Activated T-helper 1 cell treated with anti-CD3 and anti-CD28 coated beads, Interleukin-12 subunit alpha, Interleukin-12 subunit beta, Interleukin-2, Interleukin-4 antibody, amounts not matched to agents 30 ng/mL and 10 ng/mL and 1 ng/mL, durations not matched to agents 14 hours and 24 hours and 36 hours (primary cell): ENCODE measurements at regions of chr5 and their contacts with region 1.

Region 1: DNA sequence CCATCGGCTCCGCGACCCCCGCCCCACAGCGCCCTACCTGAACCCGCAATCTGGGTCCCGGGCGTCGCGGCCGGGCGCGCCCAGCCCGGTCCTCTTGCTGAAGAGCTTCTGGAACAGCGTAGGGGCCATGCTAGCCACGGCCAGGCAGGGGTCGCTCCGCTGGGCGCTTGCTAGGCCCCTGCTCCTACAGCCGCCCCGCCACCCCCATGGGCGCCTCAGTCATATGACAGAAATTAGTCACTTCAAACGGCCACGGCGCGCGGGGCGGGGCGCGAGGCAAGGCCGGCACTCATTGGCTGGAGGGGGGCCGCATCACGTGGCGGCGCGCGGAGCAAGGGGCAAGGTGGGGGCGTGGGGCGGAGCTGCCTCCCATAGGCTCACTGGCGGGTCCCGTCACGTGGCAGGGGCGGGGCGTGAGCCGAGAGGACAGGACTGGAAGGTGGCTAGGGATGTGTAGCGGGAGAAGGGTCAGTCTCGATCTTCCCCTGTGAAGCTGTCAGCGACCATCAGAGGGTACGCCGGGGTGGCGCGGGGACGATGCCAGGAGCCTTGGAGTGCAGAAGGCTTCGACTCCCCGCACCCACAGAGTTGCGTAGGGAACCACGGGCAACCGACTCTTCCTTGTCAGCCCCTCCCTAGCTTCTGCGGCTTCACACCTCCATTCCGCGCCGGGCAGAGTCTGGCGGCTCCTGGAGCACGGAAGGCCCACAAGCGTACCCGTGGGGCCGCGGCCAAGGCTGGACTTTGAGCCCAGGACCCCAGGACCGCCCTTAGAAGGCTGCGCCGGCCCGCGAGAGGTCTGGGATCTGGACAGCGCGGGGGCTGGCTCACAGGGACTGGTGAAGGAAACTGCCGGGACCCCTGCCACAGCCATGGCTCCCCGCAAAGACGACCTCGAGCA is at the start of gene FNIP1:
- DNase-seq: peak; percentile 98
- H3K4me3 Mint-ChIP-seq: peak within 1 kb of the TSS; percentile 97
- H3K27ac Mint-ChIP-seq: peak within 1 kb of the TSS; percentile 93
- H3K4me1 Mint-ChIP-seq: peaks cover 21% of the 10 kb centered on the region
- H3K27me3 Mint-ChIP-seq: peaks cover under 1% of the 10 kb centered on the region
- total RNA-seq, gene FNIP1: 18.8 and 19.0 TPM in 2 replicates

Region 2: DNA sequence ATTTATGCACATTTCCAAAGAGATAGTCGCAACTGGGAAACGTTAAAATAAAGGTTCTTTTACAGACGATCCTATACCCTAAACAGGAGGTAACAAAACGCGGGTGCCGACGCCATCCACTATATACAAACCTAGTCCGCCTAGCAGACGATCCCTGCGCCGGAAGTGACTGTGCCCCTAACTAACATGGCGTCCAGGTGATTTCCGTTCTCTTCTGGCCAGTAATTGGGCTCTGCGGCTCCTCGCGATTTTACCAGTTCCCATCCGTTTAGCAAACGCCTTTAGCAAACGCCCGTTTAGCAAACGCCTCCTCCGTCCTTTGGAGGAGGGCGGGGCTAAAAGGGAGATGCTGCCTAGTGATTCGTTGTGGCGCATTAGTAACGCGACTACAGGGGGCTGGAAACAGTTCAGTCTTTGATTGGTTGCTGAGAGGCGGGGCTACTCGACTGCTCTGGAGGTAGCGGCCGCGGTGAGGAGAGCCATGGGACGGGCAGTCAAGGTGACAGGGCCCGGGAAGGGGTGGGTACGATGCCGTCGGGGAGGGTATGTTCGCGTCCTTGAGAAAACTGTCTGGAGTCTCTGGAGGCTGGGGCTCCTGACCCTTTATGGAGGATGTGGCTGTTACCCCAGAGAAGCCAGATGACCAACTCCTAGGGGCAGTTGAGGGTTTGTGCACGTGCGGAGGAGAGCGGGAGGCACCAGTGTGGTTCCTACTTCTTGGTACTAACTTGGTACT is 626.3 kb before region 1 on chr5 and contains the start of gene LYRM7:
- intact Hi-C with region 1: loop called (anchors 1 kb)
- DNase-seq: peak; percentile 96
- H3K4me3 Mint-ChIP-seq: peak within 1 kb of the TSS; percentile 99
- H3K27ac Mint-ChIP-seq: peak within 1 kb of the TSS; percentile 98
- H3K4me1 Mint-ChIP-seq: peaks cover 51% of the 10 kb centered on the region
- H3K27me3 Mint-ChIP-seq: no peaks in the 10 kb centered on the region
- total RNA-seq, gene LYRM7: 13.7 and 15.8 TPM in 2 replicates

Region 3: GRCh38 chr5:131536211-131536826 is 260.7 kb before region 1 on chr5:
- intact Hi-C with region 1: loop called (anchors 1 kb)
- DNase-seq: no peak
- H3K4me3 Mint-ChIP-seq: peak overlapping the region; percentile 46
- H3K27ac Mint-ChIP-seq: peak overlapping the region; percentile 64
- H3K4me1 Mint-ChIP-seq: peaks cover 81% of the 10 kb centered on the region
- H3K27me3 Mint-ChIP-seq: no peaks in the 10 kb centered on the region

Region 4: GRCh38 chr5:131595088-131596033 is 201.7 kb before region 1 on chr5:
- intact Hi-C with region 1: loop called (anchors 2 kb)
- DNase-seq: peak; percentile 19
- H3K4me3 Mint-ChIP-seq: peak overlapping the region; percentile 61
- H3K27ac Mint-ChIP-seq: peak overlapping the region; percentile 82
- H3K4me1 Mint-ChIP-seq: peaks cover 39% of the 10 kb centered on the region
- H3K27me3 Mint-ChIP-seq: no peaks in the 10 kb centered on the region

Region 5: GRCh38 chr5:131783874-131784273 is 13.2 kb before region 1 on chr5:
- intact Hi-C with region 1: no loop called
- DNase-seq: no peak
- H3K4me3 Mint-ChIP-seq: no peak overlapping the region
- H3K27ac Mint-ChIP-seq: no peak overlapping the region
- H3K4me1 Mint-ChIP-seq: peaks cover 30% of the 10 kb centered on the region
- H3K27me3 Mint-ChIP-seq: no peaks in the 10 kb centered on the region

Region 6: DNA sequence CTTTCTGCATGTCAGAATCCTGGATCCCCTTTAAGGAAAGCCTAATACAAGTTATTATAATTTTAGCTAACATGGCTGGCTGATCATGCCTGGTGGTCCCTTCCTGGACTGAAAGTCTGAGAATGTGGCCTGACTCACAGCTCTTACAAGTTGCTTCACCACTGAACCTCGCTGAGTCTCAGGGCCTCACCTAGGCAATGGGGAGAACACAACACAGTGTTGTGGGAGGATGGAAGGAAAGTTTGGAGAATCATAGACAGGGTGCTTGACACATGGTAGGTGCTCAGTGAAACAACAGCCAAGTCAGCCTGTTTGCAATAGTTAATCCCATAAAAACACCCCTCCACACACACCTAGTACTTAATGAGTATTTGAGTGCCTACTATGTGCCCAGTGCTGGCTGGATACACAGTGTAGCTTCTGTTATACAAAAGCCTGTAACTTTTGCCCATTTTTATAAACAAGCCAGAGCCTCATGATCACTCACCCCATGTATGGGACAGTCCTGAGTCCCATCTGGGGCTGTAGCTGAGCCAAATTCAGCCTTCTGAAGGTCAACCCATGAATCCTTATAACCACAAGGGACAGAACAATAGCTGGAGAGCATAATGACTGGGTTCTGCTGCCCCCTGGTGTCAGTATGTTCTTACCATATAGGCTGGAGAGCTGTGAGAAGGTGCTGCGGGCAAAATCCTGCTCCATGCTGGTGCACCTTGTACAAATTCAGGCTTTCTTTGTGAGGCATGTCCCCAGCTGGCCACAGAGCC is 210.5 kb after region 1 on chr5:
- intact Hi-C with region 1: loop called (anchors 1 kb)
- DNase-seq: peak; percentile 67
- H3K4me3 Mint-ChIP-seq: peak overlapping the region; percentile 7
- H3K27ac Mint-ChIP-seq: peak overlapping the region; percentile 35
- H3K4me1 Mint-ChIP-seq: peaks cover 44% of the 10 kb centered on the region
- H3K27me3 Mint-ChIP-seq: peaks cover 41% of the 10 kb centered on the region

Region 7: DNA sequence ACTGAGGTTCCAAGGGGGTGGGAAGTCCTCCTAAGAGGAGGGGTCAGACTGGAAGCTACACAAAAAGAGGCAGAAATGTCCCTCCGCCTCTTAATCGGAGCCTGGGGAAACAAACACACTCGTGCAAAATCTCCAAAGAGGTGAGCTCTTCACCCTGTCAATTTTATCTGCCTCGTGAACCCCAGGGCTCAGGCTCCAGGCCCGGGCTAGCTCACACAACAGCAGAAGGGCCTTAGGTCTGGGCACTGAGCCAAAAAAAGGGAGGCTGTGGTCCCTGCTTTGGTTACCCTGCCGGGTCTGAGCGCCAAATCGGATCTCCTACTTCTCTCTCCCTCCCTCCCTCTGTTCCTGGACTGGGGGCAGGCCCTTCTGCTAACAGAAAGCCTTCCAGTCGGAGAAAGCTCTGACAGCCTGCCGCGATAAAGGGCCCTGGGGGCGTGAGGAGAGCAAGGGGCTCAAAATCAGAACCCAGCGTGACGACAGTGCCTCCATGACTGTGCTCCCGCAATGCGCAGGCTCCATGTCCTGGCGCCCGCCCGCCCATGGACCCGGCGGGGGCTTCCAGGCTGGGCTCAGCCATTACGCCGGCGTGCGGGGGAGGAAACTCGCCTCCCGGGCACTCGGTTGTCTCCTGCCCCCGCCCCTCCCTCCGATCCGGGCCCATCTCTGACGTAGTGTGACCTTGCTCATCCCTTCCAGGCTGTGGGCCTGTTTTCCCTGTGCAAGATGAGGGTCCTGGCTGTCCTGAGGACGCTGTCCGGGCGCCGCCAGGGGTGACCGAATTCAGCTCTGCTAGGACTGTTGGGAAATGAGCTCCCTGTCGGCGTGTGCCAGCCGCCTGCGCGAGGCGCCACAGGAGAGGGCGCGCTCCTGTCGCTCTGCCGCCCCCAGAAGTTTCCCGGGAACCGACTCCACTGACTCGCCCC is 496.3 kb after region 1 on chr5:
- intact Hi-C with region 1: loop called (anchors 1 kb)
- DNase-seq: peak; percentile 53
- H3K4me3 Mint-ChIP-seq: peak overlapping the region; percentile 93
- H3K27ac Mint-ChIP-seq: peak overlapping the region; percentile 75
- H3K4me1 Mint-ChIP-seq: peaks cover 30% of the 10 kb centered on the region
- H3K27me3 Mint-ChIP-seq: peaks cover 15% of the 10 kb centered on the region

Region 8: GRCh38 chr5:132963175-132964104 is 1166.4 kb after region 1 on chr5 and contains the start of gene AFF4:
- intact Hi-C with region 1: loop called (anchors 5 kb)
- DNase-seq: peak; percentile 85
- H3K4me3 Mint-ChIP-seq: peak within 1 kb of the TSS; percentile 93
- H3K27ac Mint-ChIP-seq: peak within 1 kb of the TSS; percentile 96
- H3K4me1 Mint-ChIP-seq: peaks cover 17% of the 10 kb centered on the region
- H3K27me3 Mint-ChIP-seq: peaks cover 3% of the 10 kb centered on the region
- total RNA-seq, gene AFF4: 38.3 and 40.9 TPM in 2 replicates